Activated T-helper 2 cell treated with anti-CD3 and anti-CD28 coated beads, Interferon-gamma antibody, Interleukin-2, Interleukin-4, amounts not matched to agents 10 μg/mL and 5 μg/mL and 100 μg/mL, durations not matched to agents 14 hours and 24 hours and 36 hours (primary cell): ENCODE measurements at regions of chr1 and their contacts with region 1.

Region 1: GRCh38 chr1:6489799-6490180 is 1.7 kb downstream of the PLEKHG5 start:
- DNase-seq: peak; percentile 71
- H3K4me3 Mint-ChIP-seq: peak overlapping the region; percentile 79
- H3K27ac Mint-ChIP-seq: peak overlapping the region; percentile 61
- H3K4me1 Mint-ChIP-seq: peaks cover 10% of the 10 kb centered on the region
- H3K27me3 Mint-ChIP-seq: peaks cover 12% of the 10 kb centered on the region

Region 2: DNA sequence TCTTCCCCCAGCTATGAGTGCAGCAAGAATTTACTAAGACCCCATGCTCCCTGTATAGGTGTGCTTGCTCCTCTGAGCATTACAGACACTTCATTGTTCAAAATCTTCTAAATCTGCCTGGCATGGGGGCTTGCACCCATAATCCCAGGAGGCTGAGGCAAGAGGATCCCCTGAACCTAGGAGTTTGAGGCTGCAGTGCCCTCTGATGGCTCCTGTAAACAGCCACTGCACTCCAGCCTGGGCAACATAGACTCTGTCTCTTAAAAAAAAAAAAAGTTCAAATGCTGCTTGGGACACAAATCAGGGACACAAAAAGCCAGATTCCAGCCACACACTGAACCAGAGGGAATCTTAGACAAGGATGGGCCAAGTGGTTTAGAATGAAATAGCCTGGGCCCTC is 92.8 kb before region 1 on chr1:
- intact Hi-C with region 1: no loop called
- DNase-seq: no peak
- H3K4me3 Mint-ChIP-seq: no peak overlapping the region
- H3K27ac Mint-ChIP-seq: no peak overlapping the region
- H3K4me1 Mint-ChIP-seq: peaks cover 17% of the 10 kb centered on the region
- H3K27me3 Mint-ChIP-seq: peaks cover 5% of the 10 kb centered on the region

Region 3: DNA sequence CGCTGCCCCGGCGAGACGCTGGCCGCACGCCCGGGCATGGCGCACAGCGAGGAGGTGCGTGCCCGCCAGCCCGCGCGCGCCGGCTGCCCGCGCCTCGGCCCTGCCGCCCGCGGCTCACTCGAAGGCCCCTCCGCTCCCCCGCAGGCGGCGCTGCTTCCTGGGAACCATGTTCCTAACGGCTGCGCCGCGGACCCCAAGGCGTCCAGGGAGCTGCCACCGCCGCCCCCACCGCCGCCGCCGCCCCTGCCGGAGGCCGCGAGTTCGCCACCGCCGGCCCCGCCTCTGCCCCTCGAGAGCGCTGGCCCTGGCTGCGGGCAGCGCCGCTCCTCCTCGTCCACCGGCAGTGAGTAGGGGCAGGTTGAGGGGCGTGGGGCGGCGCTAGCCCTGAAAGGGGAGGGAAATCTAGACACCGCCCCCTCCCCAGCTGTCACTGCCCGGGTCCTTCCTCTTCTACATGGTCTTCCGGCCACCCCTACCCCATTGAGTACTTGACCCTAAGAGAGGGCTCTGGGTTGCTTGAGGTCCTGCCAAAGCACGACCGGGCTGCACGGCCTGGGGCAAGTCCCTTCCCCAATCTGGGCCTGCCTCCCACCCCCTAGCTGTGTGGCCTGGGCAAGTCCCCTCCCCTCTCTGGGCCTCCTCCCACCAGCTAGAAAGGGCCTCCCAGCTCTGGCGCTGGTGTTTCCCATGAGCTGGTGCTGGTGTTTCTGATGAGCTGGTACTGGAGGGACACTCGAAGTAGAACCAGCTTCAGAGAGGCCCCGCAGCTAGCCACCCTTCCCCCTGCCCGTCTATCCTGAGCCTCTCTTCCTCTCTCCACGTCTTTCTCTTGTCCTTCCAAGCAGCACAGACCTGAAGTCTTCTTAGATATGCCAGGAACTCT is 40.8 kb before region 1 on chr1:
- intact Hi-C with region 1: no loop called
- DNase-seq: no peak
- H3K4me3 Mint-ChIP-seq: peak overlapping the region; percentile 35
- H3K27ac Mint-ChIP-seq: no peak overlapping the region
- H3K4me1 Mint-ChIP-seq: peaks cover 11% of the 10 kb centered on the region
- H3K27me3 Mint-ChIP-seq: peaks cover 51% of the 10 kb centered on the region

Region 4: DNA sequence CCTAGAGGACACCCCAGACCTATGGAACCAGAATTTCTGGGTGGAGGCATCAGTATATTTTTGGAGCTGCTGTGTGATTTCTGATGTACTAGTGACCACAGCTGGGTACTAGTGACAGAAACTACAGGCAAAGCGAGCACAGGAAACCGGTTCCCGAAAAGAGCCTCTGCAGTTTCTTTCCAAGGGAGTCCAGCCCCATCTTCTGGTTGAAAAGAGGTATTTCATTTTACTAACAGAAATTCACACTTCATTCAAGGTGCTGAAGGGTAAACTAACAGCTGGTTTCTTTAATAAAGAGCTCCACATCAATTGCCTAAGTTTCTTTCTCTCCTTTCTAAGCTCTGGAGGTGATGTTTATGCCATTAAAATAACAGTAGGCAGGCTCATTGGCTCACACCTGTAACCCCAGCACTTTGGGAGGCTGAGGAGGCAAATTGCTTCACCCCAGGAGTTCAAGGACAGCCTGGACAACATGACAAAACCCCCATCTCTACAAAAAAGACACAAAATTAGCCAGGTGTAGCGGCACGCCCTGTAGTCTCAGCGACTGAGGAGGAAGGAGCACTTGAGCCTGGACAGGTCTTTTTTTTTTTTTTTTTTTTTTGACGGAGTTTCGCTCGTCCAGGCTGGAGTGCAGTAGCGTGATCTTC is 156.8 kb after region 1 on chr1:
- intact Hi-C with region 1: loop called (anchors 1 kb)
- DNase-seq: no peak
- H3K4me3 Mint-ChIP-seq: no peak overlapping the region
- H3K27ac Mint-ChIP-seq: no peak overlapping the region
- H3K4me1 Mint-ChIP-seq: no peaks in the 10 kb centered on the region
- H3K27me3 Mint-ChIP-seq: no peaks in the 10 kb centered on the region